OCI-LY7 (cell line): ENCODE measurements at regions of chr3 and their contacts with region 1.

Region 1: DNA sequence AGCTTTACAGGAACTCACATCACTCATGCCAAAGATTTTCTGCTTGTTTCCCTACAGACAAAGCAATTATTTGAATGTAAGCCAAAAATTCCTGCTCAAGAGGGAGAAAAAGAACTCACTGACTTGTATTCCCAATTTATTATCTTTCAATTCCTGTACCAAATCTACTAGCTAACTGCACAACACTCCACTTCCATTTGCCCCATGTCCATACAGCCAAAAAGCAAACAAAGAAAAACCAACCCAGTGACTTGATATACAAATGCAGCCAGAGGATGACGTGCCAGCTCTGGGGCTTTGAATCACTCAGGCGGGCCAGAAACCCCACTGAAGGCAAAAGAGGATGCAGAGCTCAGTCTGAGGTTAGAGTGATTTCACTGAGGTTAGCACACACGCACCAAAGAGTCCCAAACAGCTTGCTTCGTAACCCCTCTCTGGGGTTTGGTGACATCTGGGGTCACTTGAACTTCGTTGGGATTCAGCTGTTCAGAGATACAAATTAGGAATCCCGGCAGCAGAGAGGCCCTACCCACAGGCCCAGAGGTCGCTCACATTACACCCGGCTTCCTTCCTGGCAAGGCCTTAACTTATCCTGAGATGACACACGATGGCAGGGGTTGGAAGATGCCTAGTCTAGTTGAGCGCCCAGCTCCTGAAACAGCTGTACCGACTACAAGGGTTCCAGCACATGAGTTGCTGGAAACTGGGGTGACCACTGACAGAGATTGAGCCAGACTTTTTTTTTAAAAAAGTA is 1.6 kb downstream of the RFTN1 start:
- DNase-seq: peak; percentile 92
- H3K4me3 ChIP-seq: peak overlapping the region; percentile 92
- H3K27ac ChIP-seq: peak overlapping the region; percentile 93
- H3K4me1 ChIP-seq: peaks cover 74% of the 10 kb centered on the region
- CTCF ChIP-seq: no peak

Region 2: DNA sequence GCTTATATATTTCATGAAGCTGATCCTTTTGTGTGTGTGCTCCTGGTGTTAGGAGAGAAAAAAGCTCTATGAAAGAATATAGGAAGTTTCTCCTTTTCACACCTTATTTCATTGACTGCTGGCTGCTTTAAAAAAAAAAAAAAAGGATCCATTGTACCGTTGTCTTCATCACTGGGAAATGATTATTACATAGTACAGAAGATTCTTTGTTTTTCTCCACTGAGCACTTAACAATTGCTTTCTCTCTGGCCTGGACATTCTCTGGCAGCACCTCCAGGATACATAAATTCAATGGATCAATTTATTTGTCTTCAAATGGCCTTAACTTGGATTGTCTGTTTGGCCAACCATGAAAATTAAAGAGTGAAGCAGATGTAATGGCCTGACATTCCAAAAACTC is 284.3 kb before region 1 on chr3:
- CTCF ChIA-PET with region 1: no interaction called
- POLR2A ChIA-PET with region 1: no interaction called
- intact Hi-C with region 1: no loop called
- DNase-seq: no peak
- H3K4me3 ChIP-seq: no peak overlapping the region
- H3K27ac ChIP-seq: no peak overlapping the region
- H3K4me1 ChIP-seq: no peaks in the 10 kb centered on the region
- CTCF ChIP-seq: no peak

Region 3: DNA sequence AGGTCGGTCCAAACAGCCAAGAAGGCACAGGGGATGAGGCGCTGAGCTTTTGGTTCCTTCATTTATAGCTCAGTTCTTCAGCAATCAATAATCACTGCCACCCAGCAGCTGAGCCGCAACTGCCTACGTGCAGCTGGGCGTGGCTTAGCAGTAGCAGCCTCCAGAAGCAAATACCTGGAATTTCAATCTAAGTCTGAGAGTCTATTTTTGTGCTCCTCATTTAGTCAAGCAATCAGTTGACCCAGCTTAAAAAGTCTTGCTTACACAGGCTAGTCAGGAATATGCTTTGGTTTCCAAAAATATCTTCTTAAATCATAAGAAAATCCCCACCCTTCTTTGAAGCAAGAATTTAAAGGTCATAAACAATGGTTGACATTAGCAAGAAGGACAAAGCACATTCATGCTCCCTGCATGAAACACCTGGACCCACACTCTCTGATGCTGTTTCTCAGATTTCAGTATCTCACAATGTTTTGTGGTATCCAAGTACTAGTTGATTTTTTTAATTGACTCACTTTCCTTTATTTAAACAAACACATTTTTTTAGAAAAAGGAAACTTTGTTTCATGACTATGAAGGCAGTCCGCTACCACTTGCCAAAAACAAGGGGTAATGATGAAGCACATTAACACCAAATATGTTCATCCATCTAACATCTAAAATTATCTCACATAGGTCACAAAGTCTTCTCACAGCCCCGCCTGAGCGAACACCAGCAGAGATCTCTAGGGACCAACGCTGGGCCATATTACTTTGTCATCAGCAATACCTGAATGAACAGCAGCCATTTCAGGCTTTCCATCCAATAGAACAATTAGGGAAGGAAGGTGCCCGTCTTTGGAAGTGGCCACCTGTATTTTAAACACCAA is 140.8 kb before region 1 on chr3:
- CTCF ChIA-PET with region 1: interaction called, 4 read pairs
- POLR2A ChIA-PET with region 1: interaction called, 31 read pairs
- intact Hi-C with region 1: no loop called
- DNase-seq: peak; percentile 64
- H3K4me3 ChIP-seq: peak overlapping the region; percentile 33
- H3K27ac ChIP-seq: peak overlapping the region; percentile 99
- H3K4me1 ChIP-seq: peaks cover 82% of the 10 kb centered on the region
- CTCF ChIP-seq: no peak

Region 4: DNA sequence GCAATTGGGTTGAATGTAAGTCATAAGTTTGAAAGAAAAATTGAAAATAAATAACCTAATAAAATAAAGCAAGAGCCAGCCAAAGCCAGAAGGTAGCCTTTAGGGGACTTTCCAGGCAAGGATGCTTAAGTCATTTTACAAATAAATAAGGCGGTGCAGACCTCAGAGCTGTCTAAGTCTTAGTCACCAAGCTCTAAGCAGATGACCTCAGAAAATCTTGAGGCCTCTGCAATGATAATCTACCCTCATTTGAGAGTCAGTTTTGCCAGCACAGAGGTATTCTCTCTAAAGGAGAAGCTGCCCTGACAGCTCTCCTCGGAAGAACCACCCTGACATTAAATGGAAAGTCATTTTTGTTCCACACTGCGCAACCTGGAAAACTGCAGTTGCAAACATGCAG is 132.9 kb before region 1 on chr3:
- CTCF ChIA-PET with region 1: interaction called, 4 read pairs
- POLR2A ChIA-PET with region 1: interaction called, 31 read pairs
- intact Hi-C with region 1: loop called (anchors 1 kb)
- DNase-seq: no peak
- H3K4me3 ChIP-seq: peak overlapping the region; percentile 4
- H3K27ac ChIP-seq: peak overlapping the region; percentile 99
- H3K4me1 ChIP-seq: peaks cover 96% of the 10 kb centered on the region
- CTCF ChIP-seq: no peak

Region 5: GRCh38 chr3:16427103-16427965 is 84.5 kb before region 1 on chr3:
- CTCF ChIA-PET with region 1: no interaction called
- POLR2A ChIA-PET with region 1: interaction called, 59 read pairs
- intact Hi-C with region 1: no loop called
- DNase-seq: no peak
- H3K4me3 ChIP-seq: no peak overlapping the region
- H3K27ac ChIP-seq: peak overlapping the region; percentile 5
- H3K4me1 ChIP-seq: peaks cover 93% of the 10 kb centered on the region
- CTCF ChIP-seq: no peak

Region 6: DNA sequence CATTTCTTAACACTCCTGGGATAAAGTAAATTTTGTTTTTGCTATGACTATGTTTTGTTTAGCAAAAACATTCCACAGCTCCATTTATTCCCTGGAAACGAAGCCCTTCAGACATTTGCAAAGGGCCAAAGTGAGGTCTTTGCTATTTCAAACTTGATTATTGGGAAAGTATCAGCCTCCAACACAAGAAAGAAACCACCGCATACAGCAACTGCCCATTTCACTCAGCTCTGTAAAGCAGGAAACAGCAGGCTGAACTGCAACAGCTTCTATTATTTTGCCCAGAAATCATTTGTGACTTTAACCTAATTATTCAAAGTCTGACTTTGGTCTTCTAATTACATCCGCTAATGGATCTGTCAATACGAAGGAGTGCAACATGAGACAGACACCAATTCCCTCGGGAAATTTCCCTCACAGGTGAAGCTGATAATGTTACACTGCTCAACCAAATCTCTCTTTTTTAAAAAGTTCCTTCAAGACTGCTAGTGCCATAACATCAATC is 70.4 kb before region 1 on chr3:
- CTCF ChIA-PET with region 1: no interaction called
- POLR2A ChIA-PET with region 1: interaction called, 42 read pairs
- intact Hi-C with region 1: loop called (anchors 2 kb)
- DNase-seq: peak; percentile 59
- H3K4me3 ChIP-seq: peak overlapping the region; percentile 45
- H3K27ac ChIP-seq: peak overlapping the region; percentile 93
- H3K4me1 ChIP-seq: peaks cover 100% of the 10 kb centered on the region
- CTCF ChIP-seq: no peak

Region 7: DNA sequence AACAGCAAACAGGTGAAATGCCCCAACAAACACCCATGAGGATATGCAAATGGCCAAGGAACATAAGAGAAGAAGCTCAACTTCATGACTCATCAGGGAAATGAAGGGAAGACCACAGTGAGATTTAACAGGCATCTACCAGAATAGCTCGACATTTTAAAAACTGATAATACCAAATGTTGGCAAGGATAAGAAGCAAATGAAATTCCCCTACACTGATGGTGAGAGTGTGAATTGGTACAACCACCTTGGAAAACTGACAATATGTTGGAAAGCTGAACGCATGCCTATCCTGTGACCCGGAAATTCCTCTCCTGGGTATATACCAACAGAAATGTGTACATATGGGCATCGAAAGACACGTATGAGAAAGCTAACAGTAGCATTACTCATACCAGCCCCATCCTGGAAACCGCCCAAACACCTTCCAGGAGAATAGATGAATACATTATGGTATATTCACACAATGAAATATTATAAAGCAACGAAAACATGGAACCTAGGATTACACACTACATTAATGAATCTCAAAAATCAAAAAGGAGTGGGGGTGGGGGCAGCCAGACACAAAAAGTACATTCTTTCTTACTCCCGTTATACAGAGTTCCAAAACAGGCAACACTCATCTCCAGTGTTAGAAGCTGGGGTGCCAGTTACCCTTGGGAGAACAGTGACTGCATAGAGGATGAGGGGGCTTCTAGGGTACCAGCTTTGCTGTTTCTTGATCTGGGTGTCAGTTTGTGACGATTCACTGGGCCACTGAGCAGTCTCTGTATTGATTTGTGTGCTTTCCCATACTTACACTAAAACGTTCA is 15.2 kb before region 1 on chr3:
- CTCF ChIA-PET with region 1: interaction called, 5 read pairs
- POLR2A ChIA-PET with region 1: interaction called, 36 read pairs
- intact Hi-C with region 1: no loop called
- DNase-seq: no peak
- H3K4me3 ChIP-seq: peak overlapping the region; percentile 2
- H3K27ac ChIP-seq: no peak overlapping the region
- H3K4me1 ChIP-seq: peaks cover 69% of the 10 kb centered on the region
- CTCF ChIP-seq: no peak

Region 8: DNA sequence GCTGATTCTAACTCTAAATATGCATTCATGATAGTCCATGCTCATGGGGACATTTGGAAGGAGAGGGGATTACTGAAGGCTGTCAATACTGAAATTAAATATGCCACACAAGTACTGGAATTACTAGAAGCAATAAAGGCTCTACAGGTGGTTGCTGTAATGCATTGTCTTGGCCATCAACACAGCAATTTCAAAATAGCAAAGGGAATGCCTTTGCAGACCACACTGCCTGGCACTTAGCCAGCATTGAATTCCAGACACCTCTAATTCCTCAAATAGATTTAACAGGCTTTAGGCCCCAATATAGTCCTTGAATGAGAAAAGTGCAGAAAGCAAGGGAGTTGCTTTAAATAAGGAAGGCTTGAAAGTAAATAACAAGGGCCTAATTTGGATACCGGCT is 257.1 kb after region 1 on chr3:
- CTCF ChIA-PET with region 1: no interaction called
- POLR2A ChIA-PET with region 1: no interaction called
- intact Hi-C with region 1: no loop called
- DNase-seq: no peak
- H3K4me3 ChIP-seq: no peak overlapping the region
- H3K27ac ChIP-seq: no peak overlapping the region
- H3K4me1 ChIP-seq: peaks cover 6% of the 10 kb centered on the region
- CTCF ChIP-seq: no peak